ENCODE measurements at regions of chr11 and their contacts with region 1.

Region 1: GRCh38 chr11:65314501-65315203 is at the start of gene CDC42EP2:
- DNase-seq: peak; percentile 90 to 95 (median 92)
- ATAC-seq: peak; percentile 70 to 95 (median 86)
- H3K4me3 ChIP-seq: peak within 1 kb of the TSS; percentile 80 to 99 (median 92)
- H3K27ac ChIP-seq: peak within 1 kb of the TSS; percentile 85 to 99 (median 94)
- H3K4me1 ChIP-seq: peaks cover 3 to 67% (median 43%) of the 10 kb centered on the region in 12 donors
- H3K27me3 ChIP-seq: no peaks in the 10 kb centered on the region
- CTCF ChIP-seq: peak in 2 of 12 donors; percentile 5 to 15
- POLR2A ChIP-seq: peak; percentile 33 to 88
- total RNA-seq, gene CDC42EP2: 3.3 to 25.0 (median 8.9) TPM

Region 2: GRCh38 chr11:65261591-65262380 is 52.9 kb before region 1 on chr11 and contains the start of gene POLA2:
- intact Hi-C with region 1: no loop called
- DNase-seq: peak; percentile 95 to 98 (median 95)
- ATAC-seq: peak; percentile 93 to 98 (median 96)
- H3K4me3 ChIP-seq: peak within 1 kb of the TSS; percentile 57 to 85 (median 76)
- H3K27ac ChIP-seq: peak within 1 kb of the TSS; percentile 71 to 96 (median 92)
- H3K4me1 ChIP-seq: peaks cover 0 to 21% (median 11%) of the 10 kb centered on the region in 12 donors
- H3K27me3 ChIP-seq: no peaks in the 10 kb centered on the region
- CTCF ChIP-seq: no peak
- POLR2A ChIP-seq: peak; percentile 69 to 89
- total RNA-seq, gene POLA2: 3.2 to 9.0 (median 4.2) TPM

Region 3: GRCh38 chr11:65274735-65275682 is 39.6 kb before region 1 on chr11:
- intact Hi-C with region 1: loop called (anchors 1 to 2 kb)
- DNase-seq: peak; percentile 72 to 89 (median 81)
- ATAC-seq: peak; percentile 75 to 93 (median 89)
- H3K4me3 ChIP-seq: no peak overlapping the region
- H3K27ac ChIP-seq: peak overlapping the region in 10 of 12 donors; percentile 31 to 58 (median 51)
- H3K4me1 ChIP-seq: peaks cover 0 to 28% (median 11%) of the 10 kb centered on the region in 12 donors
- H3K27me3 ChIP-seq: no peaks in the 10 kb centered on the region
- CTCF ChIP-seq: peak; percentile 62 to 89 (median 81)
- POLR2A ChIP-seq: no peak

Region 4: DNA sequence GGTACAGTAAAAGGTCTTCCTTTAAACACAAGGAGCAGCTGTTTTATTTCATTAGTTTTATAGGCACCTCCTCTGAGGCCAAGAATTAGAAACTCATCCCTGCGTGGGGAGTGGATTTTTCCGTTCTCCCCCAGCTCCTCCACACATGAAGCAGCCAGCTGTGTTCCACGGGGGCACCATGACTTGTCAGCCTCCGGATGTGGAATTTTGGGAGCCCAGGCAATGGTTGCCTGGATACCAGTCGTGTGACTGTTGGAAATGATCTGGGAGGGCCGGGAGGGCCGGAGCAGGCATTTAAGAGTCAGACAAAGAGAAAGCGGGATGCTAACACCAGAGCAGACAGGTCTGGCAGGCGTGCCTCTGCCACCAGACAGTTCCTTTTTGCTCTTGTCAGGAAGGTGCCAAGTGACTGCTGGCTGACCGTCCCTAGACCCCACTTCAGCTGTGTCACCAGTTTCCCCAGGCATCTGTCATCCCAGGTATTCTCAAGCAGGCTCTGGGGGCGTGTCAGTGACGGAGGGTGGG is 15.9 kb before region 1 on chr11:
- intact Hi-C with region 1: loop called in 3 of 10 experiments (anchors 1 to 2 kb)
- DNase-seq: peak; percentile 71 to 88 (median 75)
- ATAC-seq: peak; percentile 36 to 61 (median 50)
- H3K4me3 ChIP-seq: peak overlapping the region in 4 of 12 donors; percentile 10 to 25 (median 14)
- H3K27ac ChIP-seq: peak overlapping the region; percentile 56 to 92 (median 81)
- H3K4me1 ChIP-seq: peaks cover 0 to 66% (median 52%) of the 10 kb centered on the region in 12 donors
- H3K27me3 ChIP-seq: no peaks in the 10 kb centered on the region
- CTCF ChIP-seq: no peak
- POLR2A ChIP-seq: peak in 1 of 2 donors; percentile 20

Region 5: GRCh38 chr11:65329944-65330403 is 15.3 kb after region 1 on chr11:
- intact Hi-C with region 1: loop called in 2 of 10 experiments (anchors 1 to 2 kb)
- DNase-seq: peak in 4 of 5 donors; percentile 75 to 88 (median 86)
- ATAC-seq: peak; percentile 10 to 32 (median 24)
- H3K4me3 ChIP-seq: peak overlapping the region in 1 of 12 donors; percentile 18
- H3K27ac ChIP-seq: peak overlapping the region in 4 of 12 donors; percentile 15 to 64 (median 23)
- H3K4me1 ChIP-seq: peaks cover 0 to 24% (median 9%) of the 10 kb centered on the region in 12 donors
- H3K27me3 ChIP-seq: no peaks in the 10 kb centered on the region
- CTCF ChIP-seq: peak; percentile 76 to 88 (median 84)
- POLR2A ChIP-seq: no peak

Measured in heart left ventricle (tissue), 16 donors.